ENCODE measurements at regions of chr2 and their contacts with region 1.

Region 1: GRCh38 chr2:219498280-219499057 is at the start of gene GMPPA:
- DNase-seq: peak; percentile 96
- ATAC-seq: peak; percentile 97
- H3K4me3 Mint-ChIP-seq: peak within 1 kb of the TSS; percentile 86
- H3K27ac Mint-ChIP-seq: peak within 1 kb of the TSS; percentile 72
- H3K4me1 Mint-ChIP-seq: peaks cover 38% of the 10 kb centered on the region
- H3K27me3 Mint-ChIP-seq: peaks cover 38% of the 10 kb centered on the region
- total RNA-seq, gene GMPPA: 35.2 to 35.5 TPM

Region 2: GRCh38 chr2:219245148-219245898 is 253.1 kb before region 1 on chr2 and contains the starts of genes GLB1L and STK16:
- CTCF ChIA-PET with region 1: no interaction called
- POLR2A ChIA-PET with region 1: no interaction called
- intact Hi-C with region 1: loop called in 1 of 2 experiments (anchors 5 kb)
- DNase-seq: peak; percentile 93
- ATAC-seq: peak; percentile 62
- H3K4me3 Mint-ChIP-seq: peak within 1 kb of the TSS; percentile 89
- H3K27ac Mint-ChIP-seq: peak within 1 kb of the TSS; percentile 100
- H3K4me1 Mint-ChIP-seq: peaks cover 59% of the 10 kb centered on the region
- H3K27me3 Mint-ChIP-seq: no peaks in the 10 kb centered on the region
- total RNA-seq, gene GLB1L: 2.7 to 4.2 TPM
- total RNA-seq, gene STK16: 34.3 to 35.4 TPM

Region 3: GRCh38 chr2:219484343-219485200 is 13.9 kb before region 1 on chr2:
- CTCF ChIA-PET with region 1: interaction called, 12 read pairs
- POLR2A ChIA-PET with region 1: no interaction called
- intact Hi-C with region 1: no loop called
- DNase-seq: peak; percentile 27
- ATAC-seq: peak; percentile 51
- H3K4me3 Mint-ChIP-seq: peak overlapping the region; percentile 15
- H3K27ac Mint-ChIP-seq: no peak overlapping the region
- H3K4me1 Mint-ChIP-seq: peaks cover 6% of the 10 kb centered on the region
- H3K27me3 Mint-ChIP-seq: peaks cover 27% of the 10 kb centered on the region

Region 4: GRCh38 chr2:219530048-219530963 is 31.8 kb after region 1 on chr2:
- CTCF ChIA-PET with region 1: interaction called, 128 read pairs
- POLR2A ChIA-PET with region 1: no interaction called
- intact Hi-C with region 1: loop called (anchors 1 kb)
- DNase-seq: peak; percentile 93
- ATAC-seq: peak; percentile 97
- H3K4me3 Mint-ChIP-seq: no peak overlapping the region
- H3K27ac Mint-ChIP-seq: no peak overlapping the region
- H3K4me1 Mint-ChIP-seq: no peaks in the 10 kb centered on the region
- H3K27me3 Mint-ChIP-seq: peaks cover 49% of the 10 kb centered on the region

Region 5: DNA sequence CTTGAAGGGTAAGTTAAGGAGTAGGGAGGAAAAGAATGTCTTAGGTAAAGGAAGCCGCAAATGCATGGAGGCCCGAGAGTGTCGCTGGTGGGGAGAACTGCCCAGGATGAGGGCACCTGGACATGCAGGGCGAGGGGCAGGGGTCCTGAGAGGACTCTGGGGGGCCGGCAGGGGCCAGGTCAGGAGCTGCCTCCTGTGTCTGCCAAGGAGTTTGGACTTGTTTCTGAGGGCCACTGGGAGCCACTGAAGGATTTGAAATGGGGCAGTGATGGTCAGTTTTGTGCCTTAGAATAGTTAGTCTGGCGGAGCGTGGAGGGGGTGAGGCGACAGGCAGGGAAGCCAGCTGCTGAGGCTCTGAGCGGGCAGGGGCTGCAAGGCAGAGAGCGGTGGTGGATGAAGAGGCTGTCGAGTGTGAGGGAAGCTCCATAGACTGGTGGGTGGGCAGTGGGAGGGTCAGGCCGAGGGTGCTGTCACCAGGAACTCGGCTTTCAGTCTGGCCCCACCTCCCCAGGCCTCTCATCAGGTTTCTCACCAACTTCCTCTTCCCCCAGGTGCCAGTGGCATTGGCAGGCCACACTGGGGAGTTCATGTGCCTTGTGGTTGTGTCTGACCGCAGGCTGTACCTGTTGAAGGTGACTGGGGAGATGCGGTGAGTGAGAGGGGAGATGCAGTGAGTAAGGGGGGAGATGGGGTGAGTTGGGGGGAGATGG is 114.3 kb after region 1 on chr2:
- CTCF ChIA-PET with region 1: no interaction called
- POLR2A ChIA-PET with region 1: no interaction called
- intact Hi-C with region 1: no loop called
- DNase-seq: peak; percentile 21
- ATAC-seq: no peak
- H3K4me3 Mint-ChIP-seq: no peak overlapping the region
- H3K27ac Mint-ChIP-seq: no peak overlapping the region
- H3K4me1 Mint-ChIP-seq: peaks cover 10% of the 10 kb centered on the region
- H3K27me3 Mint-ChIP-seq: no peaks in the 10 kb centered on the region

Region 6: GRCh38 chr2:219689676-219690628 is 191.5 kb after region 1 on chr2:
- CTCF ChIA-PET with region 1: interaction called, 4 read pairs
- POLR2A ChIA-PET with region 1: no interaction called
- intact Hi-C with region 1: loop called in 1 of 2 experiments (anchors 2 kb)
- DNase-seq: peak; percentile 65
- ATAC-seq: peak; percentile 37
- H3K4me3 Mint-ChIP-seq: no peak overlapping the region
- H3K27ac Mint-ChIP-seq: no peak overlapping the region
- H3K4me1 Mint-ChIP-seq: peaks cover 16% of the 10 kb centered on the region
- H3K27me3 Mint-ChIP-seq: peaks cover 21% of the 10 kb centered on the region